Dendritic cell treated with granulocyte-macrophage colony-stimulating factor and Interleukin-4, amounts not matched to agents 40 ng/mL and 50 ng/mL, for 4 days (primary cell): ENCODE measurements at regions of chr6 and their contacts with region 1.

Region 1: DNA sequence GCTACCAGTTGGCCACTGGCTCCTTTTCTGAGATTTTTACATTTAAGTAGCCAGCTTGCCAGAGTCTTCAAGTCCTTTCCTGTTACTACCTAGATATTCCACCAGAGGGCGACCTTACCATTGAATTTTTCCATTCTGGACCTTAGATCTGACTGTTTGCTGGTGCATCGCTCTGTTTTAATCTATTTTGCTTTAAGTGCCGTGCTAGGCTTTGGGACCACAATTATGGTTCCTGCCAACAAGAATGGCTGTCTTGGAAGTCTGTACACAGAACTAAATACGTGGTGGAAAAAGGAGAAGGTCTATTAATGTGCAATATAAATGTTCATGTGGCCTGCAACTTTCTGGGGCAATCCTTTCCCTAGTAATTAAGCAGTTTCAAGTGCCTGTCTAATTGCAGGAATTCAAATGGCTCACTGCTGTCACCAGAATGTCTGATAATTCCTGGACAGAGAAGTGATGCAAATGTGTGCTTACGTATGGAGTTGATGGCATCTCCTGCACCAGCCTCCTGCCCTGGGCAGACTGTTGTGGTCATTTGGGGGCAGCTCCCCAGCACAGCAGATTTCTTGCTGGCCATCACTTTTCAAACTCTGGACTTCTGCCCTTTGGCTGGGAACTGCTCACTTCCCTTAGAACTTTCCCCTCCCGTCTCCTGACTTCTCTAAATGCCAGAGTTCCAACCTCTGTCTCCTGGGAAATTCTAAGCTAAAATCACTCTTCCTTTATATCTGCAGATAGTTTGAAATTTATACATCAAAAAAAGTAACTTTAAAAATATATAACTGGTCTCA is 5.6 kb upstream of the HLA-DOA start:
- H3K4me3 Mint-ChIP-seq: peak overlapping the region; percentile 73
- H3K27ac Mint-ChIP-seq: peak overlapping the region; percentile 99
- H3K4me1 Mint-ChIP-seq: peaks cover 75% of the 10 kb centered on the region
- H3K27me3 Mint-ChIP-seq: peaks cover 2% of the 10 kb centered on the region

Region 2: DNA sequence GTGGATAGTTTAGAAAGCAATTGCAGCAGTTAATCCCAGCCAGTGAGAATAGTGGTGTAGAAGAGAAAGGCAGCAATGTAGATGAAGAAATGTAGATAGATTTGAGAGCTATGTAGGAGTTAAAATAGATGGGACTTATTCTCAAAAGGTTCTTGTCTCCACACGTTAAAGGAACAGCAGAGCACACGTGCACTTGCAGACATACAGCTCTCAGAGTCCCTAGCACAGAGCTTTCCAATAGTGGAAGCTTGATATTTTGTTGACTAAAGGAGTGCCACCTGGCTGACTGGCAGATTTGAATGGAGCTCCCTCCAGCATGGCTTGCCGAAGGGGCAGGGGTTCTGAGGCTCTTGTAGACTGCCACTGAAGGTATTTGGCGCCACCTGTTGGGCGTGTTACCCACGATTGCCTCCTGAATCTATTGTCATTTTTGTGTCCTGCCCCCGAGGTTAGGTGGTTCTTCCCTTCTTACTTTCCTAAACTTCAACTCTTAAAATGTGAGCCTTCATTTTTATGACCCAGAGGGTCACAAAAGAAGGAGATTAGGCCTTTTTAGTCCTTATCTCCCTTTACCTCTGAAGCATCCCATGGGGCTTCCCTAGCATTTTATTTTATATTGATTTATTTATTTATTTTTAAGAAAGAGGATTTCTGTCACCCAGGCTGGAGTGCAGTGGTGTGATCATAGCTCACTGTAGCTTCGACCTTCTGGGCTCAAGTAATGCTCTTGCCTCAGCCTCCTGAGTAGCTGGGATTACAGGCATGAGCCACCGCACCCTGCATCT is 30.2 kb before region 1 on chr6:
- intact Hi-C with region 1: no loop called
- H3K4me3 Mint-ChIP-seq: no peak overlapping the region
- H3K27ac Mint-ChIP-seq: peak overlapping the region; percentile 43
- H3K4me1 Mint-ChIP-seq: peaks cover 43% of the 10 kb centered on the region
- H3K27me3 Mint-ChIP-seq: no peaks in the 10 kb centered on the region

Region 3: GRCh38 chr6:33075568-33076405 is 60.7 kb after region 1 on chr6 and contains the start of gene HLA-DPB1:
- intact Hi-C with region 1: loop called (anchors 1 kb)
- H3K4me3 Mint-ChIP-seq: peak within 1 kb of the TSS; percentile 92
- H3K27ac Mint-ChIP-seq: peak within 1 kb of the TSS; percentile 89
- H3K4me1 Mint-ChIP-seq: peaks cover 40% of the 10 kb centered on the region
- H3K27me3 Mint-ChIP-seq: no peaks in the 10 kb centered on the region

Region 4: DNA sequence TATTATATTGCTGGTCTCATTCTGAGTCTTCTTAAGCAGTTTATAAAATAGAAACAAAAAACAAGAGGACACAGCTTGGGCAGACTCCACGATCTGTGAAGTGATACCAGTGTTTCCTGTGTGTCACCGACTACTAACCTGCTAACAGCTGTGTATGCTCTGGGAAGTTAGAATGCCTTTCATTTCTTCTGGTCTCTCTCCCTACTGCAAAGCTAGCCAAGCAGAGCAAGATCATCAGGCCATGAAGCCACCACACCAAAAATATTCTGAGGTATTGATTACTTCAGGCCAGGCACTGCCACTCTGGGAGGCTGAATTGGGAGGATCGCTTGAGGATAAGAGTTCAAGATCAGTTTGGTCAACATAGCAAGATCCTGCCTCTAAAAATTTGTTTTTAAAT is 1280.7 kb after region 1 on chr6:
- intact Hi-C with region 1: no loop called
- H3K4me3 Mint-ChIP-seq: no peak overlapping the region
- H3K27ac Mint-ChIP-seq: no peak overlapping the region
- H3K4me1 Mint-ChIP-seq: peaks cover 16% of the 10 kb centered on the region
- H3K27me3 Mint-ChIP-seq: no peaks in the 10 kb centered on the region